PC-3 (cell line): ENCODE measurements at regions of chr1 and their contacts with region 1.

Region 1: DNA sequence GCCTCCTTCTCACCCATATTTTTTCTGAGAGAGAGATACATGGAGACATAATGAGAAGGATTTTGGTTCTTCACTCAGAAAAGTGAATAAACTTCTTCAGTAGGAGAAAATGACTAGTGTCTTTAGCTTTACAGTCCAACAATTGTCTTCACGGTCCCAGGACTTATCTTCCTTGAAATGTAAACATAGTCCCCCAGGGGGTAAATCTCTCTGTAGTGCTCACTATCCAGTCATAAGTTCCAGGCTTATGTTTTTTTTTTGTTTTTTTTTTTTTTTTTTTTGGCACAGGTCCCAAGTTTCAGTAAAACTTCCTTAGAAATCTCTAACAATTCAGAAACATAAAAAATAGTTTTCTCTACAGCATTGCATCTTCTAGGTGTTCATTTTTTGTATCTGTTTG is 890.2 kb upstream of the B3GALT2 start:
- DNase-seq: no peak
- ATAC-seq: no peak
- H3K4me3 ChIP-seq: no peak overlapping the region
- H3K27ac ChIP-seq: no peak overlapping the region
- H3K4me1 ChIP-seq: no peaks in the 10 kb centered on the region
- H3K27me3 ChIP-seq: no peaks in the 10 kb centered on the region
- CTCF ChIP-seq: no peak

Region 2: DNA sequence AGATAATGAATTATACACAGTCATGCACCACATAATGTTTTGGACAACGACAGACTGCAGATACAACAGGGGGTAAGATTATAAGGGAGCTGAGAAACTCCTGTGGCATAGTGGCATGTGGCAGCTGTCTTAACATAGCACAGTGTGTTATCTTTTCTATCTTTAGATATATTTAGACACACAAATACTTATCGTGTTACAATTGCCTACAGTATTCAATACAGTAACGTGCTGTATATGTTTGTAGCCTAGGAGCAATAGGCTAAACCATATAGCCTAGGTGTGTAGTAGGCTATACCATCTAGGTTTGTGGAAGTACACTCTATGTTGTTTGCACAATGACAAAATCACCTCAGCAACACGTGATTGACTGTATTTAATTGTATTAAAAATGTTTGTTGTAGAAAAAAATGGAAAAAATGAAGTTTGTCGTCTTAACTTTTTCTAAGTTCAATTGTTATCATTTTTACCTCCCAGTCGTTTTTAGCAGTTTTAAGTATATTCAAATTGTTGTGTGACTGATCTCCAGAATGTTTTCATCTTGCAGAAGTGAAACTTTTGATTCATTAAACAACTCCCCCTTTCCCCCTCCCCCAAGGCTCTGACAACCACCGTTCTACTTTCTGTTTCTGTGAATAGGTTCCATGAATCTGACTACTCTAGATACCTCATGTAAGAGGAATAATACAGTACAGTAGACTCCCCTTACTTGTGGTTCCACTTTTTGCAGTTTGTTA is 539.2 kb before region 1 on chr1:
- CTCF ChIA-PET with region 1: no interaction called
- POLR2A ChIA-PET with region 1: no interaction called
- intact Hi-C with region 1: no loop called
- DNase-seq: no peak
- ATAC-seq: no peak
- H3K4me3 ChIP-seq: no peak overlapping the region
- H3K27ac ChIP-seq: no peak overlapping the region
- H3K4me1 ChIP-seq: no peaks in the 10 kb centered on the region
- H3K27me3 ChIP-seq: no peaks in the 10 kb centered on the region
- CTCF ChIP-seq: no peak

Region 3: DNA sequence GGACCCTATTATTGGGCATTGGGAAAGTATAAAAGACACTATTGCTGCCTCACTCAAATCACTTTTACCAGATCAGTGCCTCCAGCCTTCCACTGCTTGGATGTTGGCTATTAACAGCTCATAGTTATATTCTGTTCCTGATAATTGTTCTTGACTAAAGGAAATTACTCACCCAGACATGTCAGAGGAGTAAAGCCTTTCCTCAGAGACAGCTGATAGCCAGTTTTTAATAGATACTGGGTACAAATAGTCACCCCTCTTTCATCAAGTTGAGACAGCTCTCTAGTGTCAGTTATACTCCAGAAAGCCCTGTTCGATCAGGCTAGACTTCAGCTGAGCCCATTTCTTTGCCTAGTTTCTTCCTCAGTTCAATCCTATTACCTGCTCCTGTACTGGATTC is 14.1 kb before region 1 on chr1:
- CTCF ChIA-PET with region 1: interaction called, 11 read pairs
- POLR2A ChIA-PET with region 1: no interaction called
- intact Hi-C with region 1: no loop called
- DNase-seq: no peak
- ATAC-seq: no peak
- H3K4me3 ChIP-seq: no peak overlapping the region
- H3K27ac ChIP-seq: no peak overlapping the region
- H3K4me1 ChIP-seq: no peaks in the 10 kb centered on the region
- H3K27me3 ChIP-seq: no peaks in the 10 kb centered on the region
- CTCF ChIP-seq: no peak